ENCODE measurements at regions of chr6 and their contacts with region 1.

Region 1: DNA sequence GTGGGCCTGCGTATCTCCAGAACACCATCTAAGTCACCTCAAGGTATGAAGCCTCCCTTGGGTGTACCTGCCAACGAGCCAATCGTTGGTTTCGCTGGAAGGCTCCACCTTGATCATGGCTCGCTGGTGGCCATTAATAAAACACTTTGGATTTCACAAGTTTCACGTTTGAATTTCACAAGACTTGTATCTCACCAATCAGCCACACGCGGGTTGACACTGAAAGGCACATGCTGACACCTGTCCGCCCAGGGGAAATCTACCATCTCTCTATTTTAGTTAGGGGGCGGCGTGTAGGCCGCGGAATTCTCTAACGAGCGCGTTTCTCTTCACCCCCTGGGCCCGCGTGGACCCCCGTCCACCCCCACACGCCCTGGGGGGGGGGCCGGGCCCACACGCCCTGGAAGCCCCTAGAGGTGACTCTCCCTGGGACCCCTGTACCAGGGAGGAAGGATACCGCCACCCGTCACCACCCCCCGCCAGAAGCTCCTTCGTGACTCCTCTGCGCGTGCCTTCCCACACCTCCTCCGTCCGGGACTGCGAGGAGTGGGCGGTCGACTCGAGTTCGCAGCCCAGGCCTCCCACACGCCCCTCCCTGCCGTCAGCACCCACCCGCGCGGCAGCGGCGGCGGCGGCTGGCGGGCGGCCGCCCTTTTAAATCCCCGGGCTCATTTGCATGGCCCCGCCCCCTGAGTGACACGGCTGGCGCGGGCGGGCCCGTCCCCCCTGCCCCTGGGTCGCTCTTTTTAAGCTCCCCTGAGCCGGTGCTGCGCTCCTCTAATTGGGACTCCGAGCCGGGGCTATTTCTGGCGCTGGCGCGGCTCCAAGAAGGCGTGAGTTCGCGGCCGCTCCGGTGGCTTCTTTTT is at the start of gene HMGA1:
- DNase-seq: peak; percentile 86
- H3K4me3 ChIP-seq: peak within 1 kb of the TSS; percentile 94
- H3K27ac ChIP-seq: peak within 1 kb of the TSS; percentile 97
- H3K4me1 ChIP-seq: peaks cover 52% of the 10 kb centered on the region
- H3K27me3 ChIP-seq: no peaks in the 10 kb centered on the region
- CTCF ChIP-seq: peak; percentile 6; the same call in 1 of the 2 replicates
- total RNA-seq, gene HMGA1: 1,825 and 1,951 TPM in 2 replicates

Region 2: GRCh38 chr6:34196126-34196830 is 40.1 kb before region 1 on chr6:
- CTCF ChIA-PET with region 1: no interaction called
- POLR2A ChIA-PET with region 1: interaction called, 11 read pairs
- intact Hi-C with region 1: no loop called
- DNase-seq: peak; percentile 38 to 82
- H3K4me3 ChIP-seq: peak overlapping the region; percentile 55
- H3K27ac ChIP-seq: no peak overlapping the region
- H3K4me1 ChIP-seq: peaks cover 11% of the 10 kb centered on the region
- H3K27me3 ChIP-seq: no peaks in the 10 kb centered on the region
- CTCF ChIP-seq: peak; percentile 94

Region 3: GRCh38 chr6:34223956-34224940 is 12.1 kb before region 1 on chr6:
- CTCF ChIA-PET with region 1: no interaction called
- POLR2A ChIA-PET with region 1: interaction called, 16 read pairs
- intact Hi-C with region 1: no loop called
- DNase-seq: peak; percentile 90 to 93
- H3K4me3 ChIP-seq: peak overlapping the region; percentile 80
- H3K27ac ChIP-seq: peak overlapping the region; percentile 98
- H3K4me1 ChIP-seq: peaks cover 60% of the 10 kb centered on the region
- H3K27me3 ChIP-seq: no peaks in the 10 kb centered on the region
- CTCF ChIP-seq: no peak

Region 4: DNA sequence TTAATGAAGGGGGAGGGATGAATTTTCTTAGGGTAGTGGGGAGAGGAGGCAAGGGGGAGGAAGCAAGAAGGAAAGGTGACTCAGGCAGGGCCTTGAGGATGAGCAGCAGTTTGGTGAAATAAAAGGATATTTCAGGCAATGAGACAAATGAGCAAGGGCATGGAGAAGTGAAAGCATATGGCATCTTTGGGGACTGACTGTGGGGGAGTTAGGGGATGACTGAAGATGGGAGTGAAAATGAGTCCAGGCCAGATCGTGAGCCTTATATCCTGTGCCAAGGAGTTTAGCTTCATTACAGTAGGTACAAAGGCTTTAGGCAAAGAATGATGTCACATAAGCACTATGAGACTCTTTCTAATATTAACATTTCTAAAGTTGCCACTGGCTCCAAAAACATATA is 408.4 kb after region 1 on chr6:
- CTCF ChIA-PET with region 1: no interaction called
- POLR2A ChIA-PET with region 1: no interaction called
- intact Hi-C with region 1: no loop called
- DNase-seq: no peak
- H3K4me3 ChIP-seq: no peak overlapping the region
- H3K27ac ChIP-seq: no peak overlapping the region
- H3K4me1 ChIP-seq: no peaks in the 10 kb centered on the region
- H3K27me3 ChIP-seq: no peaks in the 10 kb centered on the region
- CTCF ChIP-seq: no peak

Region 5: GRCh38 chr6:34953061-34954025 is 717.0 kb after region 1 on chr6:
- CTCF ChIA-PET with region 1: no interaction called
- POLR2A ChIA-PET with region 1: no interaction called
- intact Hi-C with region 1: no loop called
- DNase-seq: peak; percentile 34 to 79
- H3K4me3 ChIP-seq: no peak overlapping the region
- H3K27ac ChIP-seq: peak overlapping the region; percentile 56
- H3K4me1 ChIP-seq: peaks cover 18% of the 10 kb centered on the region
- H3K27me3 ChIP-seq: no peaks in the 10 kb centered on the region
- CTCF ChIP-seq: no peak

Region 6: DNA sequence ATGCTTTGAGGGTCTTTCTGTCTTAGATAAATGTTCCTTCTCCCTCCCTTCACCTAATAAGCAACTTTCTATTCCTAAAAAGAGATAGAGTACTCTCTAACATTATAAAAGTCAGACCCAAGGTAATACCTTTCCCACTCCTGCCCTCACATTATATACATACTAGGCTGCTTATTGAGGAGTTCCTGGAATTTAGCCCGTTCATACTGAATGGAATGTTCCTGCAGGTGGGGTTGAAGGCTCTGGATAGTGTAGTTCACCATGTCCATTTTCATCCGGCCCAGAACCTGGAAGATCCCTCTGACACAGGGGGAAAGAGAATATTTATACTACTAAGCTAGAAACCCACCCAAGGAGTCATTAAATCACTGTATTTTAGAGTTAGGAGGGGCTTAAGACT is 884.4 kb after region 1 on chr6:
- CTCF ChIA-PET with region 1: no interaction called
- POLR2A ChIA-PET with region 1: interaction called, 18 read pairs
- intact Hi-C with region 1: no loop called
- DNase-seq: peak in 1 of 2 experiments; percentile 55
- H3K4me3 ChIP-seq: no peak overlapping the region
- H3K27ac ChIP-seq: peak overlapping the region; percentile 96
- H3K4me1 ChIP-seq: peaks cover 14% of the 10 kb centered on the region
- H3K27me3 ChIP-seq: no peaks in the 10 kb centered on the region
- CTCF ChIP-seq: no peak